Activated T-helper 1 cell treated with anti-CD3 and anti-CD28 coated beads, Interleukin-12 subunit alpha, Interleukin-12 subunit beta, Interleukin-2, Interleukin-4 antibody, amounts not matched to agents 30 ng/mL and 10 ng/mL and 1 ng/mL, durations not matched to agents 14 hours and 24 hours and 36 hours (primary cell): ENCODE measurements at regions of chr19 and their contacts with region 1.

Region 1: DNA sequence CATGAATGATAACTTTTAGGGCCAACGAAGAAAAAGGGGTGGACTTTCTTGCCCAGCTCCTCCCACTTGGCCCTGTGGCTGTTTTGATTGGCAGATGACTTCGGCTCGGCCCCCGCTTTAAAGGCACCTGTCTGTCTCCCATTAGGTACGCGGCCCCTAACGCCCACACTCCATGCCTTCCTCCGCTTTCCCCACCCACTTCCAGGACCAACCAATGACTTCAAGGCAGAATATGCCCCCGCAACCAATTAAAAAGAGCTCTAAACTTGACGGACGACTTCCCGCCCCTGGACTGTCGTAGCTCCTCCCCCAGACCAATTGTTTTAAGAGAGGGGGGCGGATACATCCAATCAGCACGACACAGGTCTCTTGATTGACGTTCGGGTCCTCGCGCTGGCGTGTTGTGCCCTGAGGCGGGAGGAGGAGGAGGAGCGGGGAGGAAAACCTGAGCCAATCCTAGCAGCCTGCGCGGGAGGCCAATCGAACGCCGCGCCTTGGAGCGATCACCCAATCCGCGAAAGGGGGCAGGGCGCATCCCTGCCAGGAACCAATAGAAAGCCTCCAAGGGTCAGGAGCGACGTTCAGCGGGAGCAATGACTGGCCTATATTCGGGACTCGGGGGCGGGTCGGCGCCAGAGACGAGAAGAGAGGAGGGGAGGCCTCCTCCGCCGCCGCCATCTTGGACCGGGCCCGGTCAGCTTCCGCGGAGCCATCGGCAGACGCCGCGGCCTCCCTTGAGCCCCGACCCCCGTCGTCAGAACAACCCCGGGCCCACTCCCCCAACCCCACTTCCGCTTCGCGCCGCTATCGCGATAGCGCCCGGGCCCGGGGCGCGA is at the start of gene CNOT3:
- DNase-seq: peak; percentile 99
- H3K4me3 Mint-ChIP-seq: peak within 1 kb of the TSS; percentile 93
- H3K27ac Mint-ChIP-seq: peak within 1 kb of the TSS; percentile 92
- H3K4me1 Mint-ChIP-seq: peaks cover 42% of the 10 kb centered on the region
- H3K27me3 Mint-ChIP-seq: no peaks in the 10 kb centered on the region
- total RNA-seq, gene CNOT3: 70.0 and 73.2 TPM in 2 replicates

Region 2: DNA sequence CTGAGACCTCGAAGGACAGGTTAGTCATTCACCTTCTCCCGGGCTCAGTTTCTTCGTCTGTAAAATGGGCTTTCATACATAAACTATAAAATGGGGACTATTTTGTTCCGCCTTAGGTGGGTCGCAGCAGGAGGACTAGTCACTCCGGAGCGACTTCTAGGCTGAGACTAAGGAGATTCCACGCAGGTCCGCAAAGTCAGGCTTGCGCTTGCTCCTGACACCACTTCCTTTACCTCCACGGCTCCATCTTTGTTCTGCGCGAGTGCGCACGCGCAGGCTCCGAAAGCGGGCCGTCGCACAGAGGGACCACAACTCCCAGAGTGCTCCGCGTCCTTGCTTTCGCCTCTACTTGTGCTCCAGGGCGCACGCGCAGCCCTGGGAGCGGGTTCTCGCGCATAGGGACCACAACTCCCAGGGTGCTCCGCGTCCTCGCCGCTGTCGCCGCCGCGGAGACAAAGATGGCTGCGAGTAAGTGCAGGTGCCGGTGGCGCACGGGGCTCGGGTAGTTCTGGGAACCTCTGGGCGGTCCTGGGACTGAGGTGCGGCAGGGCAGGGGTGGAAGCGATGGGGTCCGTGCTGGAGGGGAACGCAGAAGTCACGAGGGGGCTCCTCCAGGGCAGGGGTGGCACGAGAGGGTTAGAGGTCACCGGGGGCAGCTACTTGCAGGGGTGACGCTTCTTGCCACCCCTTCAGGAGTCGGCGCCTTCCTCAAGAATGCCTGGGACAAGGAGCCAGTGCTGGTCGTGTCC is 34.7 kb before region 1 on chr19 and contains the start of gene NDUFA3:
- intact Hi-C with region 1: loop called (anchors 1 kb)
- DNase-seq: peak; percentile 98
- H3K4me3 Mint-ChIP-seq: peak within 1 kb of the TSS; percentile 99
- H3K27ac Mint-ChIP-seq: peak within 1 kb of the TSS; percentile 87
- H3K4me1 Mint-ChIP-seq: peaks cover 17% of the 10 kb centered on the region
- H3K27me3 Mint-ChIP-seq: no peaks in the 10 kb centered on the region
- total RNA-seq, gene NDUFA3: 110 and 125 TPM in 2 replicates

Region 3: DNA sequence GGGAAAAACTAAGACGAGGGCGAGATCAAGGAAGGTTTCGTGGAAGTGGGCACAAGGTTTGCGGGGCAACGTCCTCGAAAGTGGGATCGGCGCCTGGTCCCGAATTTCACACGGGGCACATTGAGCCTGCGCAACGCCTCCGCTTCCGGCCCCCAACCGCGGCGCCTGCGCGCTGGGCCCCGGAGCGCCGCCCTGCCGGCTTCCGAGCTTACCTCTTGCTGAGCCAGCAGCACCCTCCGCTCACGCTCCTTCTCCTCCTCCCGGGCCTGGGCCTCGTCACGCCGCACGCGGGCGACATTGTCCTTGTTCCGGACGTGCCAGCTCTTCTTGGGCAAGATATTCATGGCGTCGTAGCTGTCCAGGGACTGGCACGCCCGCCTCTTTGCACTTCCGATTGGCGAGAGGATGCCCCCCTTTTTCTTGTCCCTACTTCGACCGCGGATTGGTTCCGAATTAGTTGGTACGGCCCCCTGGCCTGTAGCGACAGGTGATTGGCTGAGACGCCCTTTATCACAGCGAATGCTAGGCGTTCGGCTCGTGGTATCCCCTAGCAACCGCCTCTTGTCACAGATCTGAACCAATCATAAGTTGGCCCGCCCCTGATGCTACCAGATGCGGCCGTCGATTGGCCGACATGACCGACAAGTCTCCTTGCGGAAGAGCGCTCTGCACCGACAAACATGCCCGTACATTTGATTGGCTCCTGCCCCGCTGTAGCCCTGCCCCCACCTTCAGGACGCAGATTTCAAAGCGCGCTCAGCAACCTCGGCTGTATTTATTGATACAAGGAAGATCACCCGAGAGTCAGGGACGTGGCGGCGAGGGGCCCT is 22.3 kb after region 1 on chr19 and contains the start of gene LENG1:
- intact Hi-C with region 1: loop called (anchors 1 kb)
- DNase-seq: peak; percentile 99
- H3K4me3 Mint-ChIP-seq: peak within 1 kb of the TSS; percentile 95
- H3K27ac Mint-ChIP-seq: peak within 1 kb of the TSS; percentile 99
- H3K4me1 Mint-ChIP-seq: peaks cover 56% of the 10 kb centered on the region
- H3K27me3 Mint-ChIP-seq: peaks cover 4% of the 10 kb centered on the region
- total RNA-seq, gene LENG1: 5.8 and 6.6 TPM in 2 replicates

Region 4: GRCh38 chr19:54231077-54231931 is 94.0 kb after region 1 on chr19:
- intact Hi-C with region 1: loop called (anchors 1 kb)
- DNase-seq: peak; percentile 77
- H3K4me3 Mint-ChIP-seq: no peak overlapping the region
- H3K27ac Mint-ChIP-seq: no peak overlapping the region
- H3K4me1 Mint-ChIP-seq: peaks cover 6% of the 10 kb centered on the region
- H3K27me3 Mint-ChIP-seq: peaks cover 43% of the 10 kb centered on the region

Region 5: GRCh38 chr19:54463531-54464043 is 326.3 kb after region 1 on chr19 and contains the start of gene LENG9:
- intact Hi-C with region 1: loop called (anchors 1 kb)
- DNase-seq: peak; percentile 96
- H3K4me3 Mint-ChIP-seq: peak within 1 kb of the TSS; percentile 84
- H3K27ac Mint-ChIP-seq: peak within 1 kb of the TSS; percentile 89
- H3K4me1 Mint-ChIP-seq: peaks cover 25% of the 10 kb centered on the region
- H3K27me3 Mint-ChIP-seq: peaks cover 21% of the 10 kb centered on the region
- total RNA-seq, gene LENG9: 8.4 and 11.5 TPM in 2 replicates

Region 6: GRCh38 chr19:54882758-54883157 is 745.5 kb after region 1 on chr19:
- intact Hi-C with region 1: no loop called
- DNase-seq: peak; percentile 4
- H3K4me3 Mint-ChIP-seq: peak overlapping the region; percentile 56
- H3K27ac Mint-ChIP-seq: no peak overlapping the region
- H3K4me1 Mint-ChIP-seq: peaks cover 12% of the 10 kb centered on the region
- H3K27me3 Mint-ChIP-seq: peaks cover 5% of the 10 kb centered on the region

Region 7: DNA sequence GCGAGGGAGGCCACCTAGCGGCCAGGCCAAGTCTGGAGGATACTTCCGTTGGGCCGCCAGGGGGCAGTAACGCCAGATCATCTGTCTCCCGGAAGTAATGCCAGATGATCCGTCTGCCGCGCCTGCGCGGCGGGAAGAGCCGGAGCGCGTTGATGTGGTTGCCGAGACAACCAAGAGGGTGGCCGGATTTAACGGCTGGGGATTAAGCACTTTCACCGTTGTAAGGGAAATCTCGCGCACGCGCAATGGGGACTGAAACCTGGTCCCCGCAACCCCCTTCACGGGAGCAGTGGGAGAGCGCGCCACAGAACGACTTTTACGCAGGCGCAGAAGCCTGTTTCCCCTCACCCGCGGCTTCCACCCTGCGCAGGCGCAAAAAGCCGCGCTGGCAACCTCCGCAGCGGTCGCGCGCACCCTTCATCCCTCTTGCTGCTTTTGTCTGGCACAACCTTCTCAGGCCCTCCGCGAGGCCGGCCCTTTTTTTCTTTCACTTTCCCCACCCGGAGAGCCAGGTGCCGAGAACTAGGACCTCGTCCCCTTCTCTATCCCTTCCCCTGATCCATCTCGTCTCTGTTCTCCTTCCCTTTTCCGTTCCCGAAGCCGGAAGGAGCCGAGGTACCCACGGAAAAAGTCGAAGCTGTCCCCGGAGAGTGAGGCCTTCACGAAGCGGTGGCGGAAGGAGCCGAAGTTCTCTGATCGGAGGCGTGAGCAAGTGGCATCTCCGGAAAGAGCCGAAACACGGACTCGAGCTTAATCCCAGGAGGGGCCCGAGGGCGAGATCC is 1516.6 kb after region 1 on chr19:
- intact Hi-C with region 1: loop called (anchors 10 kb)
- DNase-seq: peak; percentile 99
- H3K4me3 Mint-ChIP-seq: peak overlapping the region; percentile 93
- H3K27ac Mint-ChIP-seq: peak overlapping the region; percentile 99
- H3K4me1 Mint-ChIP-seq: peaks cover 43% of the 10 kb centered on the region
- H3K27me3 Mint-ChIP-seq: no peaks in the 10 kb centered on the region